ENCODE measurements at regions of chr14 and their contacts with region 1.

Region 1: DNA sequence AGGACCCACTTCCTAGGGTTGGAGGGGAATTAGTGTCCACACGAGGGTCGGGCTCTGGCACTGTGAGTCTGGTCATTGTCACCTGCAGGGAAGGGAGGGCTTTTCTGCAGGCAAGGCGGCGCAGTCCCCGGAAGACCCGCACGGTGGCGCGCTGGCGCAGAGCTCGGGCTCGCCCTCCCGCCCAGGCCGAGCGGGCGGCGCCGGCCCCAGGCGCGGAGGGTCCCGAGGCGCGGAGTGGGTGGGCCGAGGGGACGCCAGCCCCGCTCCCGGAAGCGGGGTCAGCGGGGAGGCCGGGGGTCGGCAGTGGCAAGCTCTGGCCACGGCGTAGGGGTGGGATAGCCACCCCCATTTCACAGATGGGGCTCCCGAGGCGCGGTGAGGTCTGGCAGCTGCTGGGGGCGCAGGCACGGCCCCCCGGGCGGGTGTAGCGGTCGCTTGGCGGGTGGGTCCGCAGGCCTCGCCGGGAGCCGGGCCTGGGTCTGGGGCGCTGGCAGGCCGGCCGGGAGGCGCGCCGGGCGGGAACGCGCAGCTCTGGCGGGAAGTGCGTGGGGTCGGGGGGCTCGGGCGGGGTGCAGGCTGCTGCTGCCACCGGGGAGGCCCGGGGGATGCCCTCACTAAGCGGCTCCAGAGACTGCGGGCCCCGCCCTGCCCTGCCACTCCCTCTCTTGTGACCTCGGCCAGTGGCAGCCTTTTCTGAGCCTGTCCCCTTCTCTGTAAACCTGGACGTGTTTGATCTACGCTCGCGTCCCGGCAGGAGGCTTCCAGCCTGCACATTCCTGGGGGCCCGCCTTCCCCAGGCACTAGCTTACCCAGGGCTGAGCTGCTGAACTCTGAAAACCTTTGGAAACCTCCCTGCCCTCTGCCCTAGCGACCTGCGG is 46.1 kb downstream of the CYP46A1 start:
- DNase-seq: peak; percentile 93

Region 2: DNA sequence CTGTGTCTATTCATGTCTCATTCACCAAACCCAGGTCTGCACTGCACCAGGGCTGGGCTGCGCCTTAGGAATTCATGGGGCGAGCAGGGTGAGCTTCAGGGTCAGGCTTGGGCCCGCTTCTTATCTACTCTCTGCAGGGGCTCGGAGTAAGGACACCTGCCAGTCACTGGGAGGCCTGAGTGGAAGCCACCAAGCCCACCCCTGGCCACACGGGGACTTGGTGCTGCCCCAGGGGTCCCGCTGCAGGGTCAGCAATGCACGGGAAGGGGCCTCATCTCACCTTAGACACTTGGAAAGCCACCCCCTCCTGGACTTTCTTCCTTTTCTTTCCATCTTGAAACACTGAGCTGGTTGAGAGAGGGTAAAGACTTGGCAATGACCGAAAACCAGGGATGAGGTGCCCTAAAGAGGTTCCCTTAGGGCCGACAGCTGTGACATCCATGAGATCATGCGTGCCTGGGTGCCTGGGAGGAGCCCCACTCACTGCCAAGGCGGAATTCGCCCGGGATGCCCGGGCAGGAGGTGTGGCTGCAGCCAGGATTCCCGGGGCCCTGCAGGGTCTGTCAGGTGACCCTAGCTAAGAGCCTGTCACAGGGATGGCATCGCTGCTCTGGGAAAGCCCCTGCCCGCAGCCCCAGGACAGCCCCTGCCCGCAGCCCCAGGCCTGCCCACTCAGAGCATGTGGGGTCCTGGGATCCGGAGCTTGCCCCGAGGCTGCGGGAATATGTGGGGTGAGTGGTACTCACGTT is 17.5 kb after region 1 on chr14:
- CTCF ChIA-PET with region 1: interaction called, 10 read pairs
- POLR2A ChIA-PET with region 1: interaction called, 3 read pairs
- DNase-seq: no peak

Region 3: DNA sequence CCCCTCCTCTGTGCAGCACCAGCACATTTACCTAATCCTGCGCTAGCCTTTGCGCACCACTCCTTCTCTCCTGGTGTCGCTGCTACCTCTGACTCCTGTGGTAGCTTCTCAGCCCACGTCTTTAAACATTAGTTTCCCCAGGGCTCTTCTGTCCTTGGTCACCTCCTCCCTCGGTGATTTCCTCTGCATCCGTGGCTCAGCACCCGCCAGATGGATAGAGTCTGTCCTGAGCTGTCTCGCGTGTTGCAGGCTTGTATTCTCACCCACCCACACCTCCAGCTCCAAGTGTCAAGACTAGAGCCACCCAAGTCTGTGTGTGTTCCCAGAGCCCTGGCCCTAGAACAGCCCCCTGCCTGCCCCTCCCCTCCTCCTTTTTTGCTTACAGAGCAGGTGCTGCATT is 146.2 kb after region 1 on chr14:
- CTCF ChIA-PET with region 1: interaction called, 10 read pairs
- POLR2A ChIA-PET with region 1: no interaction called
- DNase-seq: no peak

Measured in HEK293T (cell line).